A673 (cell line): ENCODE measurements at regions of chr6 and their contacts with region 1.

Region 1: DNA sequence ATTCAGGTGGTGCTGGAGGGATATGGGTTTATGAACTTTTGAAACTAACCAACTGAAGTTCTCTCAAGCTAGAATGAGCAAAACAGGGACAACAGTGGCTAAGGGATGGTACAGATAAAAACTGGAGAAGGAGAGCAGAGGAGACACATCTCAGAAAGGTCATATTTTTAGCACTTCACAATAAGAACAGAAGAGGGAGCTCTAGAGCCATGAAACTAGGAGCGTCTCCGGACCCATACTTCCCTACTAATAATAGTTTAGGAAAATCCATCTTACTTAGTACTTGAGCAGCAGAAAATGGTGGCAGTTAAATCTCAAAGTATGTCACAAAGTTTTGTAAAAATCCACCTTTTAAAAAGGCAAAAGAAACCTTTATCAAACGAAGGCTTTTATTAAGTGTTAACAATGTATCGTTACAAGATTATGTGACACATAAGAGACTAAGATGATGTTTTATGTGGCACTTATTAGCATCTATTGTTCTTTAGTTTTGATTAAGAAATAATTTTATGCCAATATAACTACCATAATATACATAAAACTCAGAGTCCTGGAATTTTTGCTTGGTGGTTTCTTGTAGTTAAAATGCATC is 278.6 kb downstream of the TBC1D32 start:
- DNase-seq: peak; percentile 69
- H3K4me3 ChIP-seq: no peak overlapping the region
- H3K27ac ChIP-seq: no peak overlapping the region
- H3K4me1 ChIP-seq: no peaks in the 10 kb centered on the region
- H3K27me3 ChIP-seq: no peaks in the 10 kb centered on the region
- CTCF ChIP-seq: peak; percentile 79

Region 2: GRCh38 chr6:119966486-119966885 is 1089.2 kb before region 1 on chr6:
- CTCF ChIA-PET with region 1: no interaction called
- POLR2A ChIA-PET with region 1: no interaction called
- intact Hi-C with region 1: no loop called
- DNase-seq: peak; percentile 13
- H3K4me3 ChIP-seq: no peak overlapping the region
- H3K27ac ChIP-seq: no peak overlapping the region
- H3K4me1 ChIP-seq: no peaks in the 10 kb centered on the region
- H3K27me3 ChIP-seq: no peaks in the 10 kb centered on the region
- CTCF ChIP-seq: peak; percentile 34; the same call in 1 of the 2 replicates

Region 3: GRCh38 chr6:121222656-121223055 is 167.0 kb after region 1 on chr6:
- CTCF ChIA-PET with region 1: no interaction called
- POLR2A ChIA-PET with region 1: no interaction called
- intact Hi-C with region 1: loop called (anchors 5 kb)
- DNase-seq: peak; percentile 36
- H3K4me3 ChIP-seq: no peak overlapping the region
- H3K27ac ChIP-seq: no peak overlapping the region
- H3K4me1 ChIP-seq: no peaks in the 10 kb centered on the region
- H3K27me3 ChIP-seq: no peaks in the 10 kb centered on the region
- CTCF ChIP-seq: peak; percentile 40; the same call in 1 of the 2 replicates

Region 4: DNA sequence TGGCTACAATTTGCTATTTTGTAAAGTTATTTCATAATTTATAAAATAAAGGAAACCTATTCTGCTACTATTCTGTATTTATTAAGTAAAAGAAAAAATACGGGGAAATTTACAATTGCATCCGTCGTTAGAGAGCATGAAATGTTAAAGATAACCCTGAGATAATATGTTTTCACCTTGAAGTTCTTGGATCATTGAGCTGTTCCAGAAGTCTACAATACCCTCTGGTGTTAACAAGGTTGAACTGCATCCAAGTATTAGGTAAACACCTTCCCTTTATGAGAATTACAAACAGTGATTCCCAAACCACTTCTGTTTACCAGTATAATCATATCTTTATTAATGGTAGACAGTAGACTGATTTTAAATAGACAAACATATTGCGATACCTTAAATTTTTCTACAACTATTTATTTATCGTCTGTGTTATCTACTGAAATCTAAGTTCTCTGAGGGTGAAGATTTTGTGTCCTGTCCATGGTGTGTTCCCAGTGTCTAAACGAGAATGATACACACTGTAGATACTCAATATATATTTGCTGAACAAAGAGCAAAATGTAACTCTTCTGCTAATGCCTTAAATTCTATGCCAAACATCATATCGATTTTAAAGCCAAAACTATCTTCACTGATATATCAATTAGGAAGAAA is 250.4 kb after region 1 on chr6:
- CTCF ChIA-PET with region 1: interaction called, 16 read pairs
- POLR2A ChIA-PET with region 1: no interaction called
- intact Hi-C with region 1: loop called (anchors 1 kb)
- DNase-seq: peak; percentile 53
- H3K4me3 ChIP-seq: no peak overlapping the region
- H3K27ac ChIP-seq: no peak overlapping the region
- H3K4me1 ChIP-seq: no peaks in the 10 kb centered on the region
- H3K27me3 ChIP-seq: no peaks in the 10 kb centered on the region
- CTCF ChIP-seq: peak; percentile 65

Region 5: DNA sequence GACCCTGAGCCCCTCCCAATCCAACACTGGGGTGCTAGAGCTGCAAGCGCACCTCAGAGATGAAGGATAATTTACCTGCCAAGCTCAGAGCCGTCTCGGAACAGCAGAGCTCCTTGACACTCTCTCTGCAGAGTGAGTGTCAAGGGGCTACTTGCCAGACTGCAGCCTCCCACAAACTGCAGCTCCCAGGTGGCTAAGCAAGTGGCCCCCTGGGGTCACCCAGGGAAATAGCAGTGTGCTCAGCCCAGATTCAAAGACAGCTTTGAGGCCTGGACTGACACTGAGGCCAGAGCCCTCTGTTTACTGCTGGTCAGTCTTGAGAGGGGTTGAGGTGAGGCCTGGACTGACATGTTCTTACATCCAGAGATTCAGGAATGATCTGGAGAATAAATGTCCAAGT is 333.8 kb after region 1 on chr6:
- CTCF ChIA-PET with region 1: no interaction called
- POLR2A ChIA-PET with region 1: no interaction called
- intact Hi-C with region 1: no loop called
- DNase-seq: no peak
- H3K4me3 ChIP-seq: no peak overlapping the region
- H3K27ac ChIP-seq: no peak overlapping the region
- H3K4me1 ChIP-seq: no peaks in the 10 kb centered on the region
- H3K27me3 ChIP-seq: no peaks in the 10 kb centered on the region
- CTCF ChIP-seq: no peak

Region 6: GRCh38 chr6:121399966-121400365 is 344.3 kb after region 1 on chr6:
- CTCF ChIA-PET with region 1: no interaction called
- POLR2A ChIA-PET with region 1: no interaction called
- intact Hi-C with region 1: loop called (anchors 5 kb)
- DNase-seq: no peak
- H3K4me3 ChIP-seq: no peak overlapping the region
- H3K27ac ChIP-seq: no peak overlapping the region
- H3K4me1 ChIP-seq: no peaks in the 10 kb centered on the region
- H3K27me3 ChIP-seq: no peaks in the 10 kb centered on the region
- CTCF ChIP-seq: no peak

Region 7: GRCh38 chr6:122033539-122034181 is 978.0 kb after region 1 on chr6:
- CTCF ChIA-PET with region 1: no interaction called
- POLR2A ChIA-PET with region 1: no interaction called
- intact Hi-C with region 1: loop called (anchors 10 kb)
- DNase-seq: peak; percentile 80
- H3K4me3 ChIP-seq: no peak overlapping the region
- H3K27ac ChIP-seq: no peak overlapping the region
- H3K4me1 ChIP-seq: no peaks in the 10 kb centered on the region
- H3K27me3 ChIP-seq: no peaks in the 10 kb centered on the region
- CTCF ChIP-seq: peak; percentile 72

Region 8: GRCh38 chr6:122184401-122184827 is 1128.7 kb after region 1 on chr6:
- CTCF ChIA-PET with region 1: no interaction called
- POLR2A ChIA-PET with region 1: no interaction called
- intact Hi-C with region 1: loop called (anchors 5 kb)
- DNase-seq: peak; percentile 27
- H3K4me3 ChIP-seq: peak overlapping the region; percentile 16
- H3K27ac ChIP-seq: no peak overlapping the region
- H3K4me1 ChIP-seq: no peaks in the 10 kb centered on the region
- H3K27me3 ChIP-seq: no peaks in the 10 kb centered on the region
- CTCF ChIP-seq: peak; percentile 66